ENCODE measurements at regions of chr1 and their contacts with region 1.

Region 1: DNA sequence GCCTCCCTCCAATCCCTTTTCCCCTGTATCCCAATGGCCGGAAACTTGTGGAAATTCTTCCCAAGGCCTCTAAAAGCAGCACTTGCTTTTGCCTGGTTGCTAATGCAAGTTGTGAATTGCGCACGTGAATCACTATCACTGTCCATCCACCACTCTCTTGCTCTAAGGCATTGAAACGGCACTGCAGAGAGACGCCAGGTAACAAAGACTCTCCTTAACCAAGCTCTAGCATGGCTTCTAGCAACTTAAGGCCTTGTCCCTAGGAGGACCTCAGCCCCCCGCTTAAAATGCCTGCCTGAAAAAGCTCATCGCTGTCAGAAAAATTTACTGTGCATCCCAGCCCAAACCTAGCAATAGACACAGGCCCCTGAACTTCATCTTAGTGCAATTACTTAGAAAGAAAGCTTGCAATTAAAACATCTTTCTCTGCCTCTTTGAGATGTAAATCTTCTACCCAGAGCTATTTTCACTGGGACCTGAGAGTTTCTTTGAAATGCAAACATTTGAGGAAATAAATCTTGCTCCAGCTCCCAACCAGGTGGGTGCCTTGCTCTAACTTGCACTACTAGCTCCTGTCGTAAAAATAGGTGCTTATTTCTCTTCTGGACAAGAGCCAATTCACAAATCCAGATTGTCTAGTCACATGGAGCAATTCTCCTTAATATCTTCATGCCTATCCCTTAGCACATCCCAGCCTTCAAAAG is 32.9 kb upstream of the ITLN2 start:
- DNase-seq: no peak
- H3K4me3 Mint-ChIP-seq: no peak overlapping the region
- H3K27ac Mint-ChIP-seq: no peak overlapping the region
- H3K4me1 Mint-ChIP-seq: no peaks in the 10 kb centered on the region
- H3K27me3 Mint-ChIP-seq: no peaks in the 10 kb centered on the region
- CTCF ChIP-seq: no peak

Region 2: DNA sequence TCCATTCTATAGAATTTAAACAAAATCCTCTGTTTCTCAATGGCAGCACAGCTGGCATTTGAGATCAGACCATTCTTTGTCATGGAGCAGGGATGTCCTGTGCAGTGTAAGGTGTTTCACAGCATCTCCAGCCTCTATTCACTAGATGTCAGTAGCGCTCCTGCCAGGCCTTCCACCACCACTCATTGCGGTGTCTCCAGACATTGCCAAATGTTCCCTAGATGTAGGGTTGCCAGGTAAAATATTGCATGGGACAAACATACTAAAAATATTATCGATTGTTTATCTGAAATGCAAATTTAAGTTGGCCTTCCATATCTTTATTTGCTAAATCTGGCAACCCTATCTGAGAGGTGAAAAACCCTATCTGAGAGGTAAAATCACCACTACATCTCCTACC is 44.6 kb before region 1 on chr1:
- CTCF ChIA-PET with region 1: interaction called, 62 read pairs
- POLR2A ChIA-PET with region 1: interaction called, 3 read pairs
- intact Hi-C with region 1: loop called (anchors 1 kb)
- DNase-seq: peak; percentile 54
- H3K4me3 Mint-ChIP-seq: no peak overlapping the region
- H3K27ac Mint-ChIP-seq: no peak overlapping the region
- H3K4me1 Mint-ChIP-seq: peaks cover 11% of the 10 kb centered on the region
- H3K27me3 Mint-ChIP-seq: peaks cover 30% of the 10 kb centered on the region
- CTCF ChIP-seq: peak; percentile 48